ENCODE measurements at regions of chr19 and their contacts with region 1.

Region 1: GRCh38 chr19:29873024-29873800 is 61.4 kb downstream of the CCNE1 start:
- DNase-seq: peak in 1 of 2 donors; percentile 68
- H3K4me3 ChIP-seq: peak overlapping the region; percentile 58 to 63
- H3K27ac ChIP-seq: no peak overlapping the region
- H3K4me1 ChIP-seq: peaks cover 8 to 9% of the 10 kb centered on the region in 2 donors
- H3K27me3 ChIP-seq: peaks cover 9% of the 10 kb centered on the region
- CTCF ChIP-seq: peak; percentile 62 to 80 (median 78)

Region 2: DNA sequence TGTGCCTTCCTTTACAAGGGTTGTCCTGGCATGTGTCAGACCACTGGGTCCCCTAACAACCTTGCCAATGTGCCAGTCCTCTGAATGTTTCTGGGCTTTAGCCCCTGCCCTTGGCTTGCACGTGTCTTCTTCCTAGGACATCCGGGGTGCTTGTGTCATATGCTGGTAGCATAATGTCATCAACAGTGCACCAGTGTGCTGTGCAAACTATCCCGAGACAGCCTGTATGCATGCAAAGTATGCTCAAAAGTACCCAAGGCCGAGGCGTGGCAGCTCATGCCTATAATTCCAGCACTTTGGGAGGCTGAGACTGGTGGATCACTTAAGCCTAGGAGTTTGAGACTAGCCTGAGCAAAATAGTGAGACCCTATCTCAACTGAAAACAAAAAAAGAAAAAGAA is 137.4 kb before region 1 on chr19:
- intact Hi-C with region 1: loop called (anchors 1 kb)
- DNase-seq: no peak
- H3K4me3 ChIP-seq: no peak overlapping the region
- H3K27ac ChIP-seq: no peak overlapping the region
- H3K4me1 ChIP-seq: no peaks in the 10 kb centered on the region
- H3K27me3 ChIP-seq: no peaks in the 10 kb centered on the region
- CTCF ChIP-seq: no peak

Region 3: GRCh38 chr19:29760752-29761502 is 112.3 kb before region 1 on chr19:
- intact Hi-C with region 1: loop called (anchors 1 kb)
- DNase-seq: no peak
- H3K4me3 ChIP-seq: no peak overlapping the region
- H3K27ac ChIP-seq: no peak overlapping the region
- H3K4me1 ChIP-seq: no peaks in the 10 kb centered on the region
- H3K27me3 ChIP-seq: peaks cover 3% of the 10 kb centered on the region
- CTCF ChIP-seq: no peak